ENCODE measurements at regions of chr10 and their contacts with region 1.

Region 1: GRCh38 chr10:13761490-13762091 is 174.8 kb downstream of the PRPF18 start:
- DNase-seq: no peak
- H3K4me3 ChIP-seq: no peak overlapping the region
- H3K27ac ChIP-seq: no peak overlapping the region
- H3K4me1 ChIP-seq: peaks cover 0 to 25% (median 5%) of the 10 kb centered on the region in 4 donors
- H3K27me3 ChIP-seq: no peaks in the 10 kb centered on the region
- CTCF ChIP-seq: no peak
- EP300 ChIP-seq: no peak
- POLR2A ChIP-seq: no peak

Region 2: GRCh38 chr10:13649844-13650521 is 111.6 kb before region 1 on chr10:
- in situ Hi-C with region 1: no loop called
- intact Hi-C with region 1: no loop called
- DNase-seq: no peak
- H3K4me3 ChIP-seq: no peak overlapping the region
- H3K27ac ChIP-seq: no peak overlapping the region
- H3K4me1 ChIP-seq: no peaks in the 10 kb centered on the region
- H3K27me3 ChIP-seq: no peaks in the 10 kb centered on the region
- CTCF ChIP-seq: no peak
- EP300 ChIP-seq: no peak
- POLR2A ChIP-seq: no peak

Region 3: GRCh38 chr10:13808556-13809391 is 47.2 kb after region 1 on chr10:
- in situ Hi-C with region 1: no loop called
- intact Hi-C with region 1: no loop called
- DNase-seq: no peak
- H3K4me3 ChIP-seq: no peak overlapping the region
- H3K27ac ChIP-seq: no peak overlapping the region
- H3K4me1 ChIP-seq: no peaks in the 10 kb centered on the region
- H3K27me3 ChIP-seq: peaks cover 6% of the 10 kb centered on the region
- CTCF ChIP-seq: no peak
- EP300 ChIP-seq: no peak
- POLR2A ChIP-seq: no peak

Region 4: GRCh38 chr10:15353471-15354017 is 1592.0 kb after region 1 on chr10:
- in situ Hi-C with region 1: no loop called
- intact Hi-C with region 1: loop called (anchors 5 kb)
- DNase-seq: no peak
- H3K4me3 ChIP-seq: no peak overlapping the region
- H3K27ac ChIP-seq: peak overlapping the region in 3 of 4 donors; percentile 8 to 56 (median 30)
- H3K4me1 ChIP-seq: peaks cover 7 to 31% (median 14%) of the 10 kb centered on the region in 4 donors
- H3K27me3 ChIP-seq: no peaks in the 10 kb centered on the region
- CTCF ChIP-seq: no peak
- EP300 ChIP-seq: no peak
- POLR2A ChIP-seq: no peak

Measured in transverse colon (tissue), 4 donors.